HEK293 (cell line): ENCODE measurements at regions of chrX and their contacts with region 1.

Region 1: DNA sequence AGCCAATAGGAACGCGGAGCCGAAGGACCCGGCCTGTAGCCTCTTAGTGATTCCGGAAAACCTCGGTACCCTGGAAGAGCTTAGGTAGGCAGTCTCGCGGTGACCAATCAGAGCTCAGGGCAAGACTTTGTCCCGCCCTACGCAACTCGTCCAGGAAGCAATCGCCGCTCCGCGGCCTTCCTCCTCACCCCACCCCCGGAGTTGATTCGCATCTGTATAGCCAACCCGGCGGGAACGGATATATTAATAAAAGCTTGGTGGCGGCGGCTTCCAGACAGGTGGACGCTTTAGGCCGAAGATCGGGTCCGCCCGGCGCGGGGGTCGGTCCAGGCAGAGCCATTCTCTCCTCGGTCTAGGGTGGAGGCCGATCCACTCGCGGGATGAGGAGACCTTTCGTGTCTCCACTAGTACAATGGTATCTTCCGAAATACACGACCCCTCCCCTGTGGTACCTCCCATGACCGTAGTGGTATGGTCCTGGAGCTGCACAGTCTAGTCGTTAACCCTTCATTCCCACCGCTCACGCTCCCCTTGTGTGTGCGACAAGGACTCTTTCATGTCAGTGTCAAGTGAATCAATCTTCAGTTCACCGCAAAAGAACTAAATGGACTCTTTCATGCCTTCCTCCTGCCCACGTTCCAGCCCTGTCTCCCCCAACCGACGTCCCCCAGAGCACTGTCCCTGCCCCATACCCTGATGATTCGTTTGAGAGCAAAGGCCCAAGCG is 24.2 kb upstream of the GLOD5 start:
- H3K4me3 ChIP-seq: peak overlapping the region; percentile 76
- H3K27ac ChIP-seq: peak overlapping the region; percentile 86
- H3K4me1 ChIP-seq: no peaks in the 10 kb centered on the region
- CTCF ChIP-seq: 0 out of 2 replicates have a peak, but pooled peaks have one; percentile 14

Region 2: DNA sequence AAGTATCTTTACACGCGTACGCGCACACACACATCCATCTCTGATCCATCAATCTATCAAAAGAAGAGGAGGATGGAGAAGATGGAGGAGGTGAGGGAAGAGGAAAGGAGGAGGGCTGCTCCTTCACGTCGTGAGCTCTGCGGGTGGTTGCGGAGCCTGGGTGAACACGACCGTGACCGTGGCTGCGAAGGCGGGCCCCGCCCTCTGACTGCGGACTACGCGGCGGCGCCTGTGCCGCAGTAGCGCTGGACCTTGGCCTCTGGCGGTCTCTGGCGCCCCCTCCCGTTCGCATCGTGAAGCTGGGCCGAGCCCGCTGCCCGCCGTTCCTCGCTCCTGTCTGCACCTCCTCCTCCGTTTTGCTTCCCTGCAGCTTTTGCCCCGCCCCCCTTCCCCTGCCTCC is 1214.1 kb before region 1 on chrX:
- CTCF ChIA-PET with region 1: no interaction called
- POLR2A ChIA-PET with region 1: no interaction called
- H3K4me3 ChIP-seq: peak overlapping the region; percentile 44
- H3K27ac ChIP-seq: no peak overlapping the region; the same call in 1 of the 2 replicates
- H3K4me1 ChIP-seq: no peaks in the 10 kb centered on the region
- CTCF ChIP-seq: peak; percentile 92

Region 3: GRCh38 chrX:48676106-48676892 is 61.1 kb before region 1 on chrX:
- CTCF ChIA-PET with region 1: no interaction called
- POLR2A ChIA-PET with region 1: interaction called, 13 read pairs
- H3K4me3 ChIP-seq: peak overlapping the region; percentile 68
- H3K27ac ChIP-seq: peak overlapping the region; percentile 77
- H3K4me1 ChIP-seq: peaks cover 3% of the 10 kb centered on the region; the same call in 1 of the 2 replicates
- CTCF ChIP-seq: no peak; the same call in 1 of the 2 replicates

Region 4: GRCh38 chrX:48696301-48697181 is 40.8 kb before region 1 on chrX and contains the start of gene SUV39H1:
- CTCF ChIA-PET with region 1: no interaction called
- POLR2A ChIA-PET with region 1: interaction called, 14 read pairs
- H3K4me3 ChIP-seq: peak within 1 kb of the TSS; percentile 60
- H3K27ac ChIP-seq: peak within 1 kb of the TSS; percentile 78
- H3K4me1 ChIP-seq: no peaks in the 10 kb centered on the region
- CTCF ChIP-seq: no peak

Region 5: GRCh38 chrX:48801280-48802088 is 64.1 kb after region 1 on chrX and contains the start of gene HDAC6:
- CTCF ChIA-PET with region 1: no interaction called
- POLR2A ChIA-PET with region 1: interaction called, 16 read pairs
- H3K4me3 ChIP-seq: peak within 1 kb of the TSS; percentile 80
- H3K27ac ChIP-seq: peak within 1 kb of the TSS; percentile 85
- H3K4me1 ChIP-seq: peaks cover 4% of the 10 kb centered on the region; the same call in 1 of the 2 replicates
- CTCF ChIP-seq: no peak

Region 6: DNA sequence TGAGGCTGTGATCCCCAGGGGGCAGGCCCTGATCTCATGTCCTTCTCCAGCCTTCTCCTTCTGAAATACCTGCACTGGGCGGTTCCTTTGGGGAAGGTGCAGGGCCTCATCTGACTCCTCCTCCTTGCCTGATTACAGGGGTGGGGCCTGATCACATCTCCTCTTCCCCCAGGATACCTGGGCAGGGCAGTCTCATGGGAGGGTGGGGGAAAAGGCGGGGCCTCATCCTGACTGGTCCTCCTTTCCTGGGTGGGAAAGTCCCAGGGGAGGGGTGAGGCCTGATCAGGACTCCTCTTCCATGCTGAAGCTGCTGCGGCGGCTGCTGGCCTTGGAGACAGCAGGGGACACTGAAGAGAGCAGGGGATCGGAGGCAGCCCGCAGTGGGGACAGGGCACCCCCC is 292.5 kb after region 1 on chrX:
- CTCF ChIA-PET with region 1: no interaction called
- POLR2A ChIA-PET with region 1: no interaction called
- H3K4me3 ChIP-seq: no peak overlapping the region
- H3K27ac ChIP-seq: no peak overlapping the region
- H3K4me1 ChIP-seq: no peaks in the 10 kb centered on the region
- CTCF ChIP-seq: no peak